CD14-positive monocyte (primary cell): ENCODE measurements at regions of chr1 and their contacts with region 1.

Region 1: DNA sequence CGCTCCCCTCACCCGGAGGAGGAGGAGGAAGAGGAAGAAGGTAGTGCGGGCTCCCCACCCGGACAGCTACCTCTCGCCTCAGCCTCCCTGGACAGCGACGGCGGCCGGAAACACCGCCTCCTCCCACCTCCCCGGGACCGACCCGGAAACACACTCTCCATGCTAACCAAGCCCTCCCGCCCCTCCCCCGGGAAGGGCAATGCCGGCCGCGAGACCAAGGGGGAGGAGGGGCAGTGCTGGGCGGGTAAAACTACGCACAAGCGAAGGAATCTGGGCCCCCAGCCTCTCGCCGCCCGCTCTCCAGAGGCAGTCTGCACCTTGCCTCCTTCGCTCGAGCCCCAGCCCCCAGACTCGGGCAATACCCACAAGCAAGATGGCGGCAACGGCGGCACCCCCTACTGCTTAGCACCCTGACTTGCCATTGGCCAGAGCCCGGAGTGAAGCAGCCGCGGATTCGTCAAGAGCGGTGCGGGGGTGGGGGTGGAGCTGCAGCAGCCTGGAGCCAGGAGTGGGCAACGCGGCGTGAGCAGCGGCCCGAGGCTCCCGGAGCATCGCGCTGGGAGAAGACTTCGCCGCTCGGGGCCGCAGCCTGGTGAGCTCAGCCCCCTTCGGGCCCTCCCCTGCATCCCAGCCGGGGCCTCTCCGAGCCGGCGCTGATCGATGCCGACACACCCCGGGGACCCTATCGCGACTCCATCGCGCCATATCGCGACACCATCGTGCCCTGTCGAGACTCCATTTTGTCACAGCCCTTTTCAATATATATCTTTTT is at the starts of genes KIAA0319L and NCDN:
- DNase-seq: peak; percentile 90 to 95 (median 93)
- H3K4me3 ChIP-seq: peak within 1 kb of the TSS; percentile 82 to 98 (median 91)
- H3K4me3 Mint-ChIP-seq: peak within 1 kb of the TSS; percentile 93 to 95
- H3K27ac ChIP-seq: peak within 1 kb of the TSS; percentile 76 to 86
- H3K27ac Mint-ChIP-seq: peak within 1 kb of the TSS; percentile 83 to 94 (median 89)
- H3K4me1 ChIP-seq: peaks cover 27 to 39% of the 10 kb centered on the region in 2 donors
- H3K4me1 Mint-ChIP-seq: peaks cover 64% of the 10 kb centered on the region
- H3K27me3 ChIP-seq: no peaks in the 10 kb centered on the region
- H3K27me3 Mint-ChIP-seq: peaks cover 0 to 1% (median 0%) of the 10 kb centered on the region in 3 donors
- CTCF ChIP-seq: no peak
- polyA plus RNA-seq, gene KIAA0319L: 20.6 to 75.3 (median 28.6) TPM
- polyA plus RNA-seq, gene NCDN: 5.0 to 7.9 (median 7.0) TPM

Region 2: DNA sequence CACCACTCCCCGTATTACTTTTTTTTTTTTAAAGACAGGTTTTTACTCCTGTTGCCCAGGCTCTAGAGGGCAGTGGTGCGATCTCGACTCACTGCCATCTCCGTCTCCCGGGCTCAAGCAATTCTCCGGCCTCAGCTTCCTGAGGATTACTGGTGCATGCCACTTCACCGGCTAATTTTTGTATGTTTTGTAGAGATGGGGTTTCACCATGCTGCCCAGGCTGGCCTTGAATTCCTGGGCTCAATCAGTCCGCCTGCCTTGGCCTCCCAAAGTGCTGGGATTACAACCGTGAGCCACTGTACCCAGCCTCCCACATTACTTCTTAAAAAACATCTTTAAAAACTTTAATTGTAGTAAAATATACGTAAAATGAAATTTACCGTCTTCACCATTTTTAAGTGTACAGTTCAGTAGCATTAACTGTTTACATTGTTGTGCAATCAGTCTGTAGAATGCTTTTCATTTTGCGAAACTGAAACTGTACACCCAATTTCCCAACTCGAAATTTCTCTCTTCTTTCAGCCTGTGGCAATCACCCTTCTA is 212.0 kb before region 1 on chr1:
- intact Hi-C with region 1: loop called in 1 of 2 experiments (anchors 10 kb)
- DNase-seq: peak; percentile 51 to 77 (median 77)
- H3K4me3 ChIP-seq: peak overlapping the region; percentile 75 to 84 (median 78)
- H3K4me3 Mint-ChIP-seq: peak overlapping the region; percentile 82 to 90
- H3K27ac ChIP-seq: peak overlapping the region; percentile 92 to 97
- H3K27ac Mint-ChIP-seq: peak overlapping the region; percentile 92 to 97 (median 96)
- H3K4me1 ChIP-seq: peaks cover 18 to 23% of the 10 kb centered on the region in 2 donors
- H3K4me1 Mint-ChIP-seq: peaks cover 26% of the 10 kb centered on the region
- H3K27me3 ChIP-seq: no peaks in the 10 kb centered on the region
- H3K27me3 Mint-ChIP-seq: peaks cover 0 to 2% (median 0%) of the 10 kb centered on the region in 3 donors
- CTCF ChIP-seq: peak; percentile 69

Region 3: DNA sequence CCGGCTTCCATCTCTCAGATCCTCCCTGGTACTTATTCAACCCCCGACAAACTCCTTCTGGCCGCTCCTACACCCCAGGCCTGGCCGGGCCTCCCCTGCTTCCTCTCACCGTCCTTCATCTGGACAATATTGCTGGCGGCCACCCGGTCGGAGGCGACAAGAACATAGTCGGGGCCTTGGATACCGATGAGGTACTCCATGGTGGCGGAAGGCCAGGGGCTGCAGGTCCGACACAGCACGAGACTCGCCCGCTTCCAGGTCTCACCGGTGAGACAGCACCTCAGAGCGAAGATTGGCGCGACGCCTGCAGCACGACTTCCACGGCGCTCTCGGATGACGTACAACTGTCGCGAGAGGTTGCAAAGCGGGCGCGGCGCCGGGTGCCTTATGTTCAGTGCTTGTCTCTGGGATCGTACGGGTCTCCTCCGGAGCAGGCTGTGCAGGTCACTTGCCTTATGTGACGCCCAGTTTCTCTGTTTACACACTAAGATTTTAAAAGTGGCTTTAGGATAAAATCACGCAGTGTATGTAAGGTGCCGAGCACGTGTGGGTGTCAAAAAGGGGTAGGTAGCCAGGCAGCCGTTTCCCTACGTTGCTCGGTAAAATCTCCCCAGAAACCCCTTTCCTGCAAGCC is 83.9 kb after region 1 on chr1 and contains the start of gene PSMB2:
- intact Hi-C with region 1: no loop called
- DNase-seq: peak; percentile 90 to 93 (median 93)
- H3K4me3 ChIP-seq: peak within 1 kb of the TSS; percentile 67 to 98 (median 92)
- H3K4me3 Mint-ChIP-seq: peak within 1 kb of the TSS; percentile 99
- H3K27ac ChIP-seq: peak within 1 kb of the TSS; percentile 79 to 89
- H3K27ac Mint-ChIP-seq: peak within 1 kb of the TSS; percentile 93 to 99 (median 98)
- H3K4me1 ChIP-seq: peaks cover 25 to 35% of the 10 kb centered on the region in 2 donors
- H3K4me1 Mint-ChIP-seq: peaks cover 35% of the 10 kb centered on the region
- H3K27me3 ChIP-seq: peaks cover 11 to 15% of the 10 kb centered on the region in 2 donors
- H3K27me3 Mint-ChIP-seq: peaks cover 9 to 25% (median 12%) of the 10 kb centered on the region in 3 donors
- CTCF ChIP-seq: no peak
- polyA plus RNA-seq, gene PSMB2: 27.9 to 84.1 (median 78.6) TPM